Activated T-helper 2 cell treated with anti-CD3 and anti-CD28 coated beads, Interferon-gamma antibody, Interleukin-2, Interleukin-4, amounts not matched to agents 10 μg/mL and 5 μg/mL and 100 μg/mL, durations not matched to agents 14 hours and 24 hours and 36 hours (primary cell): ENCODE measurements at regions of chr2 and their contacts with region 1.

Region 1: DNA sequence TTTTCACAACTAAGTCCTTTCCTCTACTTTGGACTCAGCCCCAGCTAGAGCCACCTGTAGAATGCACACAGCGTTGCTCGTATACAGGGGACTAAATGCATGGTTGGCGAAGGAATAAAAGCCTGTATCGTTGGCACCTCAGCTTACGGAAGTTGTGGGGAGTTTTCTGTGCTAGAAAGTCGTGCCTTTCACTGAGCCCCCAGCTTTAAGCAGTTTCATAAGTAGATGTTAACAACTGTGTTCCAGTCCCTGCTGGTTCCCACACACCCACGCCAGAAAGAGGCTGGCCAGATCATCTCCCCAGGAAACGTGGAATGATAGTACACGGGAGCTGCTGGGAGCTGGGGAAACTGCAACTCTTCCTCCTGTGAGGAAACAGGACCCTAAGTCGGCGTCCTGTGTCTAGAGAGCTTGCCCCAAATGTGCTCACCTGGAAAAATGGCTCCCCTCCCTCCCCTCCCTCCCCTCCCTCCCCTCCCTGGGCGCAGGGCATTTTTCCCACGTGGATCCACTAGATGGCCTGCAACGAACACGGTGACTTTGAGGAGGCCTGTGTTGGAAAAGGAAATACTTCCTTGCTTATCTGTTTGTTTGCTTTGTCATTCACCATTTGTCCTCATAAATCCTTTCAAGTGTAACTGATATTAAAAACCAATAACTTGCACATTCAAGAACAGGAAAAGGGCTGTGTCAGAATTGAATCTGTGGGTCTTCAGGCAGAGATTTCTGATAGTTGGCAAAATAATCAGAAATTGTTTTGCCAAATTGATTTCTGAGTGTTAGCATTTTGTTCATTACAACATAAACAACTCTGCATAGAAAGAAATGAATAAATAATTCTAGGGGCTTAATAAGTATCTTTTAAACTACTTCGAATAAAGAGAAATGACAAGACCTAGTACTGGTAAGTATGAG is 43.9 kb upstream of the RFX8 start:
- DNase-seq: no peak
- H3K4me3 Mint-ChIP-seq: no peak overlapping the region
- H3K27ac Mint-ChIP-seq: no peak overlapping the region
- H3K4me1 Mint-ChIP-seq: peaks cover 35% of the 10 kb centered on the region
- H3K27me3 Mint-ChIP-seq: no peaks in the 10 kb centered on the region

Region 2: GRCh38 chr2:101479810-101480209 is 39.0 kb before region 1 on chr2:
- intact Hi-C with region 1: loop called (anchors 5 kb)
- DNase-seq: no peak
- H3K4me3 Mint-ChIP-seq: no peak overlapping the region
- H3K27ac Mint-ChIP-seq: no peak overlapping the region
- H3K4me1 Mint-ChIP-seq: peaks cover 35% of the 10 kb centered on the region
- H3K27me3 Mint-ChIP-seq: peaks cover 3% of the 10 kb centered on the region

Region 3: DNA sequence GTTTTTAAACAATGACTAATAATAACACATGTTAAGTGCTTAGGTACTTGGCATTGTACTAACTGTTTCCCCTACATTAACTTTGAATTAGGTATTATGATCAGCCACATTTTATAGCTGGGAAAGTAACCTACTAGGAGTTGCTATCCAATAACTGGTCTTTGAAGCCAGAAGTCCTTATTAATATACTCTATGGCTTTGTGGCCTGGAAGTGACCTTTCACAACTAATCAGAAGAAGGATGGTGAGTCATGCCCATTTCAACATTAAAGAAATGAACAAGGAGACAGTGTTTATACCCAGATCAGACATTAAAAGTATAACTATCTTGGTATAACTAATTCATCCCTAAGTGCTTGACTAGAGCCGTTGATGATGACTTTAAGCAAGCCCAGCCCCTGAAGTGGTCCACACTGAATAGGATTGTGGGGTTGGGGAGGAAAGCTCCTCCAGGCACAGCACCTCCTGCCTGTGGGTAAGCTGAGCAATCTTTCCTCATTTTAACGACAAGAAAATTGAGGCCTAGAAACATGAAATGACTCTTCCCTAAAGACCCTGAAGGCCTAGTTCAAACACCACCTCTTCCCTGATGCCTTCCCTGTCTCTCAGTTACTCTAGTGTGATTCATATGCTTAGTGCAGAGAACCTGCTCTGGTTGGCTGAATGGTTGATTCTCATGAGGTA is 27.7 kb after region 1 on chr2:
- intact Hi-C with region 1: no loop called
- DNase-seq: no peak
- H3K4me3 Mint-ChIP-seq: no peak overlapping the region
- H3K27ac Mint-ChIP-seq: no peak overlapping the region
- H3K4me1 Mint-ChIP-seq: peaks cover 11% of the 10 kb centered on the region
- H3K27me3 Mint-ChIP-seq: peaks cover 11% of the 10 kb centered on the region